CD4-positive, alpha-beta memory T cell (primary cell): ENCODE measurements at regions of chr14 and their contacts with region 1.

Region 1: DNA sequence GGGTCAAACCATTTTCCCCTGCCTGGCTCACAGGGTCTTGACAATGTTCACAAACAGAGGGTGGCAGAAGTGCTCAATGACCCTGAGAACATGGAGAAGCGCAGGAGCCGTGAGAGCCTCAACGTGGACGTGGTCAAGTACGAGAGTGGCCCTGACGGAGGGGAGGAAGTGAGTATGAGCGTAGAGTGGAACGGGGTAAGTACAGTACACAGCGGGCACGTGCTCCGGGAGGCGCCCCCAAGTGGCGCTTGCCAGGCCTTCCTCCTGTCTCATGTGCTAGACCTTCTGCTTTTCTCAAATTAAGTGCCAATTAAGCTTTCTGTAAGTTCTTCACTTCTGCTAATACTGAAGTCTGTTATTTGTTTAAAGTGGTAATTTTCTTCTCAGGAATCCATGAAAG is 35.9 kb downstream of the XRCC3 start:
- DNase-seq: peak in 4 of 5 donors; percentile 9 to 28 (median 22)
- H3K4me3 ChIP-seq: no peak overlapping the region
- H3K4me3 Mint-ChIP-seq: no peak overlapping the region
- H3K27ac ChIP-seq: no peak overlapping the region
- H3K27ac Mint-ChIP-seq: peak overlapping the region in 5 of 7 donors; percentile 15 to 91 (median 59)
- H3K4me1 ChIP-seq: no peaks in the 10 kb centered on the region
- H3K4me1 Mint-ChIP-seq: peaks cover 0 to 1% (median 0%) of the 10 kb centered on the region in 4 donors
- H3K27me3 ChIP-seq: no peaks in the 10 kb centered on the region
- H3K27me3 Mint-ChIP-seq: no peaks in the 10 kb centered on the region

Region 2: DNA sequence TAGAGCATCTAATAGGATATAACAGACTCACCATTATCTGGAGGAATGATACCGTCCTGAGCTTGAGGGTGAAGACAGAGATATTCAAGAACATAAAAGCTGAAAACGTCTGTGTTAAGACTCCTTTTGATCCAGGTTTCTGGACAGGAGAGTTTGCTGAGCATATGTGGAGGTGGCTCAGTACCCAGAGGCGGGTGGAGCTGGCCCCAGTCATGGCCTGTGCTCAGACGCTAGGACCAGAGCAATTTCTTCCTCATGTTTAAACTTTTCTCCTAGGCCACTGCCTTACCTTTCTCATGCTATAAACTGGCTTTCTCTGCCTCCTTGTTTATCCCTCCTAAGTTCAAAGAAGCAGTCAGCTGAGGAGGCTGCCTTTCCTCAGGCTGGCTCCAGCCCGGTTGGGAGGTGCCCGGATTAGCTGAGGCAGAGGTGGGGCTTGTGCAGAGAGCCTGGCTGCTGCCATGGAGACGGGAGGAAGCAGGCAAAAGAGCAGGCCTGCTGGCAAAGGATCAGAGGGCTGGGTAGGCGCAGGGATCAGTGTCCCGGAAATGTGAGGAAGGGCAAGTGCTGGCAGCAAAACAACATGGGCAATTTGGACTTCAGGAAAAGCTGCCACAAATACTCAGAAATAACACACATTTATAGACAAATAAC is 102.9 kb before region 1 on chr14:
- CTCF ChIA-PET with region 1: interaction called, 3 read pairs
- POLR2A ChIA-PET with region 1: no interaction called
- intact Hi-C with region 1: loop called (anchors 1 kb)
- DNase-seq: no peak
- H3K4me3 ChIP-seq: no peak overlapping the region
- H3K4me3 Mint-ChIP-seq: no peak overlapping the region
- H3K27ac ChIP-seq: no peak overlapping the region
- H3K27ac Mint-ChIP-seq: no peak overlapping the region
- H3K4me1 ChIP-seq: no peaks in the 10 kb centered on the region
- H3K4me1 Mint-ChIP-seq: peaks cover 0 to 2% (median 0%) of the 10 kb centered on the region in 4 donors
- H3K27me3 ChIP-seq: no peaks in the 10 kb centered on the region
- H3K27me3 Mint-ChIP-seq: no peaks in the 10 kb centered on the region